ENCODE measurements at regions of chrX and their contacts with region 1.

Region 1: DNA sequence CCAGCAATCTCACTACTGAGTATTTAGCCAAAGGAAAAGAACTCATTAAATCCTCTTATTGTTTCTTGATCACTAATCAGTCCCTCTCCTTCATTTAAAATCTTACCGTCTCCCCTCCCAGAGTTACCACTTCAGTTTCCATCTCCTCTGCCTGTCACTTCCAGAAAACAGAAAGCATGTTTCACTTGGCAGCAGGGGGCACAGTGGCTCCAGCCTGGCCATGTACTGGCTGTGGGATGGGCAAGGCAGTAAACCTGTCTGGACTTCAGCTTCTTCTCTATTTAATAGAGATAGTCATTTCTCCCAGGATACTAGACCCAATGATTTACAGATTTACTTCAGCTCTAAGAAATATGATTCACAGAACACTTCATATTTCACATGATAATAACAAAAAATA is 63.2 kb downstream of the CD40LG start:
- DNase-seq: peak; percentile 35 to 42
- ATAC-seq: peak; percentile 64

Region 2: DNA sequence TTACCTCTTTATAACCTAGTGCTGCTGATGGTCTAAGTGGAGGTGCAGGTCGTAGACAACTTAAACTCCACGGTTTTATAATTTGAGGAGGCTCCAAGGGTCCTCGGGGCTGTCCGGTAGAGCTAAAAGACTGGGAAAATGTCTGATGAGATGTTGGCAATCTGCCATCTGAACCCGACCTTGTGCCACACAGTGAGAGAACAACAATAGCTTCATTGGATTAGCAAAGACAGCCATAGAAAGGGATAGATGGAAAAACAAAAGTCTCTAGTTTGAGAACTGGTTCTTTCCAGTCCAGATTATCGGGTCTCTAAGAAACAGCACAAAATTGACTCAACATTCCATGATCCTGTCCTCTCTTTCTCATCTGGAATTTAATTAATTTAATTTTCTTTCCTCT is 31.6 kb before region 1 on chrX:
- intact Hi-C with region 1: no loop called
- DNase-seq: no peak
- ATAC-seq: no peak

Region 3: DNA sequence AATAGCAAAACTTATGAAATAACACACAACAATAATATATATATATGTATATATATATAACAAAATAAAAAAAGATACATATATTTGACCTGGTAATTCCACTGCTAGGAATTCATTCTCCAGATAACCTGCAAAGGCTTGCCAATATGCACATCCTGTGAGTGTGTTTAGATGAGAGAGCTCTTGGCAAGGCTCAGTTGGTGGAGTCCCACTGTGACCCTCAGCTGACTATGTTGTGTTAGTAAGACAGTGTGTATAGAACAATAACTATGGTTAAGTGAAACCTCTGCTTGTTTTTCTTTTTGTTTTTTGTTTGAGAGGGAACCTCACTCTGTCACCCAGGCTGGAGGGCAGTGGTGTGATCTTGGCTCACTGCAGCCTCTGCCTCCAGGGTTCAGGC is 208.9 kb after region 1 on chrX:
- intact Hi-C with region 1: loop called in 1 of 2 experiments (anchors 10 kb)
- DNase-seq: no peak
- ATAC-seq: no peak

Region 4: GRCh38 chrX:136953867-136954787 is 243.0 kb after region 1 on chrX:
- intact Hi-C with region 1: no loop called
- DNase-seq: peak; percentile 60 to 74
- ATAC-seq: peak; percentile 83